Activated T-helper 2 cell treated with anti-CD3 and anti-CD28 coated beads, Interferon-gamma antibody, Interleukin-2, Interleukin-4, amounts not matched to agents 10 μg/mL and 5 μg/mL and 100 μg/mL, durations not matched to agents 14 hours and 24 hours and 36 hours (primary cell): ENCODE measurements at regions of chr2 and their contacts with region 1.

Region 1: DNA sequence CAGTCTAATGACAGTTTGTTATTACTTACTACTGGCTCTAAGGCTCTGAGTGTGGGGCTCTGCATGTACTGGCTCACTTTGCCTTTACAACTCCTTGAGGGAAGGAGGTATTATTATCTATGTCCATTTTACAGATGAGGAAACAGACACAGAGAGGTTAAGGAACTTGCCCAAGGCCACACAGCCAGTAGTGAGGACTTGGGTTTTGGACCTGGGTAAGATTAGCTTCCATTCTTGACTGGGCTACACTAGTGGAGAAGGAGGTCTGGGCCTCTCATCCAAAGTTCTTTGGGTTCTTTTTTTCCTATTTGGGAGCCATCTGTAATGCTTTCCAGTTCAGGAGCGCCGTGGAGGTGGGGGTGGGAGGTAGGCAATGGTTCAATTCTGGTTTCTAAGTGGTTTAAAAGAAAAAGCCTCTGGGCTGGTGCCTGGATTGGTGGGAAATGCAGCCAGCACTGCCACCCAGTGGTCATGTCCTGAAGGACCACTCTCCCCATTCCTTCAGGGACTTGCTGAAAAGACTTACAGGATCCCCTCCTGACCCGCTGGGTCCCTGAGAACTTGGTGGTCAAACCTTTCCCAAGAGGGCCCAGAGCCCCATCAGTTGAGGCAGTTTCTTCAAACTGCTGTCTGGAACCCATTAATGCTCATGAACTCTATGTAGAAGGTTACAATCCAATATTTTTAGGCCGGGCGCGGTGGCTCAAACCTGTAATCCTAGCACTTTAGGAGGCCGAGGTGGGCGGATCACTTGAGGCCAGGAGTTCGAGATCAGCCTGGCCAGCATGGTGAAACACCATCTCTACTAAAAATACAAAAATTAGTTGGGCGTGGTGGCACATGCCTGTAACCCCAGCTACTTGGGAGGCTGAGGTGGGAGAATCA is 38.6 kb upstream of the NOTO start:
- DNase-seq: peak; percentile 33
- H3K4me3 Mint-ChIP-seq: no peak overlapping the region
- H3K27ac Mint-ChIP-seq: no peak overlapping the region
- H3K4me1 Mint-ChIP-seq: no peaks in the 10 kb centered on the region
- H3K27me3 Mint-ChIP-seq: peaks cover 7% of the 10 kb centered on the region

Region 2: DNA sequence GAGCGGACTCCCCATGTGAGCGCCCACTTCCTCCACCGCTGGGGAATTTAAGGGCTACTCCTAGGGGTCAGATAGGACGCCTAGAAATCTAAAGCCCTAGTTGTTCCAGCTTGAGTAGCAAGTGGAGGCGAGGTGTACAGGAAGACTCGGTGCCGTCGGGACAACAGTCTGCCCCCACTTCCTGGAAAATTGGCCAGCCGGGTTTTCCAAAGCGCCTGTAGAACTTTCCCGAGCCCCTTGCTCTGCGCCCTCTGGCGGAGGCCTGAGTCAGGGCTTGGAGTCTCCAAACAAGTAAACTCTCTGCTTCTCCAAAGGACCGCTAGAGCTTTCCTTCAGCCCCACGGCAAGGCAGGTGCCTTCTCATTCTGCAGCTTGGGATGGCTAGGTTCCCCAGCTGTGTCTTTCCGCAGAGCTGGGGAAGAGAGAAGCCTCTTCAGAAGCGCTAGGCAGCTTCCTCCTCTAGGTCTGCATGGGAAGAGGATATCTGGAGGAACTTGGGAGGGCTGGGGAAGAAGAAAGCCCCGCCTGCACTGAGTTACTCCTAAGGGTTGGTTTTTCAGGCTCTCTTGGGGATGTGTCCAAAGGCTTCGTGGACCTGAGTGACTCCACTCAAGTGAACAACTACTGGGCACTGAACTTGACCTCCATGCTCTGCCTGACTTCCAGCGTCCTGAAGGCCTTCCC is 275.8 kb before region 1 on chr2:
- intact Hi-C with region 1: loop called (anchors 5 kb)
- DNase-seq: peak; percentile 36
- H3K4me3 Mint-ChIP-seq: peak overlapping the region; percentile 77
- H3K27ac Mint-ChIP-seq: no peak overlapping the region
- H3K4me1 Mint-ChIP-seq: peaks cover 1% of the 10 kb centered on the region
- H3K27me3 Mint-ChIP-seq: peaks cover 24% of the 10 kb centered on the region

Region 3: GRCh38 chr2:72993147-72993932 is 170.4 kb before region 1 on chr2:
- intact Hi-C with region 1: loop called (anchors 2 kb)
- DNase-seq: peak; percentile 21
- H3K4me3 Mint-ChIP-seq: no peak overlapping the region
- H3K27ac Mint-ChIP-seq: no peak overlapping the region
- H3K4me1 Mint-ChIP-seq: no peaks in the 10 kb centered on the region
- H3K27me3 Mint-ChIP-seq: no peaks in the 10 kb centered on the region

Region 4: DNA sequence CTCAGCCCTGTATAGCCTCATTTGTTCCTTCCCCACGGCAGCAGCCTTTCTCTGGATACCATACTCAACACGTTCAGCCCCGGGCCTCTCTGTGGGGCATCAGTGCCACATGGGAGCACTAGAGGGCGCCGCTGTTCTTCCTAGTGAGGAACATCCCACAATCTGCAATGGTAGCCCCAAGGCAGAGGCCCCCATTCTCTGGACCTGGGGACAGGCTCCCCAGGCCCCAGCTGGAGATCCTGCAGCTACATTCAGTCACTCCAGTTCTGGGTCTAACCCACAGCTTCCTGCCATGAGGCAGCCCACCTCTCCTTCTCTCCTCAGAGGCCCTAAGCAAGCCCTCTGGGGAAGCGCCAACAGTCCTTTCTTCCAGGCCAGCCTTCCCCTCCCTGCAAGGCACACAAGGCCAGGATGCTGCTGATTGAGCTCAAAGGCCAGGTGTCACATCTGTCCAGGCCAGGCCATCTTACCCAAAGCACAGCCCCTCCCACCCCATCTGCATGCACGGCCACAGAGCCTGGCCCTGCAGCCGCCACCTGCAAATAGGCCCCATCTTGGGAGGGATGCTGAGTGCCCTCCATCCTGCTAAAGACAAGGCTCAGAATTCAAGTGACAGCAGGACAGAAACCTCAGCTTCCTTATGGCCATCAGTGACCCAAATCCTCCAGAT is 77.9 kb before region 1 on chr2:
- intact Hi-C with region 1: loop called (anchors 1 kb)
- DNase-seq: peak; percentile 72
- H3K4me3 Mint-ChIP-seq: no peak overlapping the region
- H3K27ac Mint-ChIP-seq: no peak overlapping the region
- H3K4me1 Mint-ChIP-seq: peaks cover 2% of the 10 kb centered on the region
- H3K27me3 Mint-ChIP-seq: no peaks in the 10 kb centered on the region

Region 5: DNA sequence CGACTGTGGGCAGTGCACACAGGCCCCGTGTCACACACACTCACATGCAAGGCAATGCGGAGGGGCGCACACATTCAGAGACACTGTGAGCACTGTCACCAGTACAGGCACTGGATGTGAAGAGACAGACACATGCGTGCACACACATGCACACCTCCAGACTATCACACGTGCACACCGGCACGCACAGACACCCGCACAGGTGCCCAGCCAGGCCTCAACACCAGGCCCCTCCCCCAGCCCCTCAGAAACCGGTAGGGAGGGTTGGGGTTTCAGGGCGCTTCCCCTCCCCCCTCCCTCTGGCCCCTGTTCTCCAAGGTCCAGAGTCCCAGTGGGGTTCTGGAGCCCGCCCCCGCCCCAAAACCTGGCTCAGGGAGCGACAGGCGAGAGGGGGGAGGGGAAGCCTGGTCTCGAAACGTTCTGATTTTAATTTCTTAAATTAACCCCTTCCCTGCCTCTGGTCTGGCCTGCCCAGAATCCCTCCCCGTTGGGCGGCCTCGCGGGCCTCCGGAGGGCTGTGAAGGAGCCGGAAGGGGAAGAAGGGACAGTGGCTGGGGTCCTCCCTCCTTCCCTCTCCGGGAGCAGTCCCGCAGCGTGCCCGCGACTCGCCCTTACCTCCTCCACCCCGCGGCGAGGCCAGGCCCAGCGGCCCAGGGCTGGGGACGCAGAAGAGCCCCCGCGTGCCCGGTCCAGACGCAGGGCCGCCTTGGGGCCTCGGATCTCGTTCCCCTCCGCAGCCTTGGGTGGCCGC is 120.0 kb after region 1 on chr2:
- intact Hi-C with region 1: no loop called
- DNase-seq: no peak
- H3K4me3 Mint-ChIP-seq: peak overlapping the region; percentile 78
- H3K27ac Mint-ChIP-seq: peak overlapping the region; percentile 53
- H3K4me1 Mint-ChIP-seq: peaks cover 13% of the 10 kb centered on the region
- H3K27me3 Mint-ChIP-seq: peaks cover 20% of the 10 kb centered on the region